ENCODE measurements at regions of chr17 and their contacts with region 1.

Region 1: DNA sequence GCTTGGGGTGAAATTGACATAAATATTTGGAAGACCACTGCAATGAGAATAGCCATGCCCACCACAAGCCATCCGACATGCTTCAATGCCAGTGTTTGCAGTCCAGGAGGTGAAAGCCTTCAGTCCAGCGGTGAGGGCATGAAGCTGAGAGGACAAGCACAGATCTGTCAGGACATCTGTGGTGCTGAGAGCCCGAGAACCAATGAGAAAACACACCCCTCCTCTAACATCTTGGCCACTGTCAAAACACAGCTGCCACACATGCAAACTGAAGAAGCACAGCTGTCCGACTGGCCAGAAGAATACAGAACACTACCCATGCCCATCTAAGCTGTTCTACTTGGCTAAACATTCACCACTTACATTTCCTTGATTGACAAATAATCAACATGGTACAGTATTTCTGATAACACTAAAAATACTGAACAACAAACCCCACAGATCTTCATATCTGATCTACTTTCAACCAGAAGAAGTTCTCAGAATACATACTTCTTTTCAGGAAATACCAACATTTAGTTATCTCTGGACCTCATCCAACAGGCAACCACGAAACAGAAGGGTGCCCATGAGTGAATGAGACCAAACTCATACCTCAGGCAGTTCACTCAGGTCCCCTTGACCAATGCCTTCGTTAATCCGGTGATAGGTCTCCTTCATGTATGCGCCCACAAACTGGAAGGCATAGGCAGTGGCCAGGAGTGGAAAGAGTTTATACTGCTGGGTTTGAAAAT is 10.1 kb upstream of the FBF1 start:
- DNase-seq: no peak
- ATAC-seq: no peak
- H3K4me3 ChIP-seq: no peak overlapping the region
- H3K27ac ChIP-seq: no peak overlapping the region
- H3K4me1 ChIP-seq: no peaks in the 10 kb centered on the region
- H3K27me3 ChIP-seq: no peaks in the 10 kb centered on the region
- CTCF ChIP-seq: no peak
- EP300 ChIP-seq: no peak
- POLR2A ChIP-seq: no peak
- RAD21 ChIP-seq: no peak

Region 2: GRCh38 chr17:75749545-75750389 is 201.2 kb before region 1 on chr17:
- CTCF ChIA-PET with region 1: no interaction called
- POLR2A ChIA-PET with region 1: no interaction called
- RAD21 ChIA-PET with region 1: no interaction called
- SMC1A ChIA-PET with region 1: no interaction called
- in situ Hi-C with region 1: no loop called
- intact Hi-C with region 1: no loop called
- DNase-seq: no peak
- ATAC-seq: peak; percentile 82
- H3K4me3 ChIP-seq: no peak overlapping the region
- H3K27ac ChIP-seq: no peak overlapping the region
- H3K4me1 ChIP-seq: peaks cover 10% of the 10 kb centered on the region
- H3K27me3 ChIP-seq: no peaks in the 10 kb centered on the region
- CTCF ChIP-seq: peak; percentile 85 to 94 (median 88)
- EP300 ChIP-seq: no peak
- POLR2A ChIP-seq: no peak
- RAD21 ChIP-seq: peak; percentile 77

Region 3: GRCh38 chr17:75940724-75941441 is 10.1 kb before region 1 on chr17 and contains the start of gene FBF1:
- CTCF ChIA-PET with region 1: no interaction called
- POLR2A ChIA-PET with region 1: no interaction called
- RAD21 ChIA-PET with region 1: no interaction called
- SMC1A ChIA-PET with region 1: no interaction called
- in situ Hi-C with region 1: no loop called
- intact Hi-C with region 1: no loop called
- DNase-seq: peak; percentile 46
- ATAC-seq: peak; percentile 100
- H3K4me3 ChIP-seq: peak within 1 kb of the TSS; percentile 85
- H3K27ac ChIP-seq: peak within 1 kb of the TSS; percentile 65
- H3K4me1 ChIP-seq: no peaks in the 10 kb centered on the region
- H3K27me3 ChIP-seq: no peaks in the 10 kb centered on the region
- CTCF ChIP-seq: no peak
- EP300 ChIP-seq: no peak
- POLR2A ChIP-seq: peak; percentile 94
- RAD21 ChIP-seq: no peak
- polyA plus RNA-seq, gene FBF1: 0.29 to 0.35 TPM

Region 4: DNA sequence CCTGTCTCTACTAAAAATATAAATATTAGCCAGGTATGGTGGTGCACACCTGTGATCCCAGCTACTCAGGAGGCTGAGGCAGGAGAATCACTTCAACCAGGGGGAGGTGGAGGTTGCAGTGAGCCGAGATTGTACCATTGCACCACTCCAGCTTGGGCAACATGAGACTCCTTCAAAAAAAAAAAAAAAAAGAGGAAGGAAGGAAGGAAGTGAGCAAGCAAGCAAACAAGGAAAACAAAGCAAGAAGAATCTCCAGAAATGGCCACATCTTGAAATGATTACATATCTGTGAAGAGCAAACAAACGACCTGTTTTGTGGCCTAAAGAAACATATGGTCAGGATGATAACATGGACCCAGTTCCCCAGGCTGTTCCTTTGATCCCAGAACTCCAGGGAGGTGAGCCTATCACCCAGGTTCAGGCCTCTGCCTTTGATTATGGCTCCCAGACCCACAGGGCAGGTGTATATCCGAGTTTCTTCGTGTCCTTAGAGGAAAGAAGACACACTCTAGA is 19.1 kb after region 1 on chr17:
- CTCF ChIA-PET with region 1: no interaction called
- POLR2A ChIA-PET with region 1: interaction called, 10 read pairs
- RAD21 ChIA-PET with region 1: no interaction called
- SMC1A ChIA-PET with region 1: interaction called, 3 read pairs
- in situ Hi-C with region 1: no loop called
- intact Hi-C with region 1: no loop called
- DNase-seq: no peak
- ATAC-seq: no peak
- H3K4me3 ChIP-seq: no peak overlapping the region
- H3K27ac ChIP-seq: no peak overlapping the region
- H3K4me1 ChIP-seq: no peaks in the 10 kb centered on the region
- H3K27me3 ChIP-seq: no peaks in the 10 kb centered on the region
- CTCF ChIP-seq: no peak
- EP300 ChIP-seq: no peak
- POLR2A ChIP-seq: no peak
- RAD21 ChIP-seq: no peak

Measured in GM12878 (cell line).